Lower leg skin (tissue), 4 donors: ENCODE measurements at regions of chr19 and their contacts with region 1.

Region 1: DNA sequence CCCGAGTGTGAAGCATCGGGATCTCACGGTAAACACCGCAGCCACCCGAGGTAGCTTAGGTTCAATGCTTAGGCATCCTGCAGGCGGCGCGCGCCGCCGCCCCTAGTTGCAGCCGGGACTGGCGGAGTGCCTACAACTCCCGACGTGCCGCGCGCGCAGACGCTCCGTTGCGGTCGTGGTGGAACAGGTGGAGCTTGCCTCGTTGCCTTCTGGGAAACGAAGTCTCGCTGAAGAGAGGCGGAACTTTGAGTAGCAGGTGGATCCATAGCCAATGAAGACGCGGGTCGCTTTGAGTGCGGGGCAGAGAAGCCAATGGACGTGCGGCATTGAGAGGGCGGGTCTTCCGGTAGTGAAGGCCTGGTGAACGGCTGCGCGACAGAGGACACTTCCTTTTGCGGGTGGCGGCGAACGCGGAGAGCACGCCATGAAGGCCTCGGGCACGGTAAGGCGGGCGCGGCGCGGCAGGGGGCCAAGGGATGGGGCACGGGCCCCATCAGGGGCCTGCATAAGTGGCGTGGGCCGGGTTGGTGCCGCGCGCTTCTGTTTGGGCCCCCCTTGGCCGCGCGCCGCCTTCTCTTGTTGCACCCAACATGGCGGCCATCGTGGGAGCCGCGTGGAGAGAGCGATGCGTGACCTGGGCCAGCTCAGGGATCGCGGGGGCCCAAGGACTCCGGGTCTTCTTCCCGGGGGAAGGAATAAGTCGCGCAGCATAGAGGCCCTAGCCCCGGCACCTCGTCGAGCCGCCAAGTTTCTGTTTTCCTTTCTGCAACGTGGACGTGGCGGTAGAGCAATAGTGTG is at the start of gene RPL18A:
- DNase-seq: peak; percentile 99 to 100
- H3K4me3 ChIP-seq: peak within 1 kb of the TSS; percentile 90
- CTCF ChIP-seq: peak in 1 of 3 donors; percentile 41
- POLR2A ChIP-seq: peak in 1 of 2 donors; percentile 43
- total RNA-seq, gene RPL18A: 2,094 to 3,301 (median 2,396) TPM

Region 2: DNA sequence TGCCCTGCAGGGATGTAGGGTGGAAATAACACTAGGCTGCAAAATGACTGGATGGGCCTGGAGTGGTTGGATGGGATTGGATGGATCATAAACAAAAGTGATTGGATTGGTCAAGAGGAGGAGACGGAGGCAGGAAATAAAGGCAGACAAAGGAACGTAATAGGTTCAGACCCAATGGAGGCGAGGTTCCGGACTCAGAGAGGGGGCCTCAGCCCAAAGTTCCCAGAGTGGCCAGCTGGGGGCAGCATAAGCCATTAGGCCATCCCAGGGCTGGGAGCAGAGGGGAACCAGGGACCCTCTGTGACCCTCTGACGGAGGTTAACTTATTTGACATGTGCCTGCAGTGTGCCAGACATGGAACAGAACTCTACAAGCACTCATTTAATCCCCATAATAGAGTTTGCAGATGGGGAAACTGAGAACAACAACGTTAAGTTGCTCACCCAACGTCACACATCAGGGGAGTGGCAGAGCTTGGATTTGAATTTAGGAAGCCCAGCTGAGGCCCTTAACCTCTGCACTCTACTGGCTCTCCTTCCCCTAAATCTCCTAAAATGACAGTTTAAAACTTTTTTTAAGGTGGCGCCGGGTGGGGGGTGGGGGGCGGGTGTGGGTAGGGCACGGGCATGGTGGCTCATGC is 155.8 kb before region 1 on chr19:
- intact Hi-C with region 1: loop called (anchors 10 kb)
- DNase-seq: no peak
- H3K4me3 ChIP-seq: no peak overlapping the region
- CTCF ChIP-seq: no peak
- POLR2A ChIP-seq: no peak

Region 3: GRCh38 chr19:17932485-17933338 is 73.0 kb after region 1 on chr19 and contains the start of gene CCDC124:
- intact Hi-C with region 1: loop called (anchors 5 kb)
- DNase-seq: peak; percentile 86 to 98
- H3K4me3 ChIP-seq: peak within 1 kb of the TSS; percentile 54
- CTCF ChIP-seq: peak in 1 of 3 donors; percentile 62
- POLR2A ChIP-seq: peak in 1 of 2 donors; percentile 50
- total RNA-seq, gene CCDC124: 32.6 to 91.9 (median 47.4) TPM